ENCODE measurements at regions of chr19 and their contacts with region 1.

Region 1: DNA sequence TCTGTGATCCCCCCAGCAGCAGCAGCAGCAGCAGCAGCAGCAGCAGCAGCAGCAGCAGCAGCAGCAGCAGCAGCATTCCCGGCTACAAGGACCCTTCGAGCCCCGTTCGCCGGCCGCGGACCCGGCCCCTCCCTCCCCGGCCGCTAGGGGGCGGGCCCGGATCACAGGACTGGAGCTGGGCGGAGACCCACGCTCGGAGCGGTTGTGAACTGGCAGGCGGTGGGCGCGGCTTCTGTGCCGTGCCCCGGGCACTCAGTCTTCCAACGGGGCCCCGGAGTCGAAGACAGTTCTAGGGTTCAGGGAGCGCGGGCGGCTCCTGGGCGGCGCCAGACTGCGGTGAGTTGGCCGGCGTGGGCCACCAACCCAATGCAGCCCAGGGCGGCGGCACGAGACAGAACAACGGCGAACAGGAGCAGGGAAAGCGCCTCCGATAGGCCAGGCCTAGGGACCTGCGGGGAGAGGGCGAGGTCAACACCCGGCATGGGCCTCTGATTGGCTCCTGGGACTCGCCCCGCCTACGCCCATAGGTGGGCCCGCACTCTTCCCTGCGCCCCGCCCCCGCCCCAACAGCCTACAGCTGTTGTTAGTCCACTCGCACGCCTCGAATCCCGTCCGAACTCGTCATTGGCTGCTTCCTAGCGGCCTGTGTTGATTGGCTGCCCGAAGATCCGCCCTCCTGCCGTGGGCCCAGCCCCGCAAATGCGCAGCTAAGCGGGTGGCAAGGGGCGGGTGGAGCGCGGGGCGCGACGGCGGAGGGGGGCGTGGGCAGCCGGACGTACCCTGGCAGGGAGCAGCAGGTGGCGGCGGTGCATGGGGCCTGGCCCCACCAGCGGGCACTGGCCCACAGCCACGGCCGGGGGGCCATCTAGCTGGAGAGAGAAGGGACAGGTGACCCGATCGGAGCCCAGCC is 1.4 kb upstream of the SIX5 start:
- DNase-seq: peak; percentile 97
- ATAC-seq: peak; percentile 73
- H3K4me3 Mint-ChIP-seq: peak overlapping the region; percentile 97
- H3K27ac Mint-ChIP-seq: peak overlapping the region; percentile 97
- H3K4me1 Mint-ChIP-seq: peaks cover 13% of the 10 kb centered on the region
- H3K27me3 Mint-ChIP-seq: peaks cover 5% of the 10 kb centered on the region; the same call in 1 of the 2 replicates
- CTCF ChIP-seq: peak; percentile 98

Region 2: GRCh38 chr19:45681391-45682015 is 88.9 kb before region 1 on chr19:
- CTCF ChIA-PET with region 1: interaction called, 15 read pairs
- POLR2A ChIA-PET with region 1: interaction called, 3 read pairs
- DNase-seq: peak; percentile 93
- ATAC-seq: peak; percentile 53
- H3K4me3 Mint-ChIP-seq: peak overlapping the region; percentile 65
- H3K27ac Mint-ChIP-seq: no peak overlapping the region
- H3K4me1 Mint-ChIP-seq: peaks cover 14% of the 10 kb centered on the region
- H3K27me3 Mint-ChIP-seq: peaks cover 38% of the 10 kb centered on the region
- CTCF ChIP-seq: peak; percentile 96

Region 3: DNA sequence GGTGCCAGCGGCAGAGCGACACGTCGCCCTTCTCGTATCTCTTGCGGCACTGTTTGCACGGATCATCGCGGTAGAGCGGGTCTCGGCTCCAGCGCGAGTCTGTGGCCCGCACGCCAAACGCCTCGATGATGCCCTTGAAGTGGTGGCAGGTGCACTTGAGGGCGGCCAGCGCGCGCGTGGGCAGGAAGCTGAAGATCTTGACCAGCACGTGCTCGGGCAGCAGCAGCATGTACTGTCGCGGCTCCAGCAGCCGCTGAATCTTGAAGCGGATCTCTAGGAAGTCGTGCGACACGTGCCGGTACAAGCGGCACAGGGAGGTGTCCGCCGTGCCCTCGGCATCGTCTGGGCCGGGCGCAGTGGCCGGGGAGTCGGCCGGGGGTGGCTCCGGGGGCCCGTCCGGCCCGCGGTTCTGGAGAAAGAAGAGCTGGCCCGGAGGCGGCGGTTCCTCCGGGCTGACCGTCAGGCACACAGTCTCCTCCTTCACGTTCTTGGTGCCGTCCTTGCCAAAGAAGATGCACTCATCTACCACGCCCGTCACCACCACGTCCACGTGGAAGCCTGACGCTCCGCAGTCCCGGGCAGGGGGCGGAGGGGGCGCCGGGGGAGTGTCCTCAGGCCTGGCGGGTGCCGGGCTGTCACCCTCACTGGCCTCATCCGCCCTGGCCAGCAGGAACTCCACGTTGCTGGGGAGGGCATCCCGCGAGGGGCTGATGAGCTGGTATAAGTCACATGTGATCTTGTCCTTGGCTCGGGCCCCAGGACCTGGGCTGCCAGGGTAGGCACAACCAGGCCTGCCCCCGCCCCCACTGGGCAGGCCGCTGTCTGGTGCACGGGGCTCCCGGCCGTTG is 58.4 kb before region 1 on chr19:
- CTCF ChIA-PET with region 1: interaction called, 80 read pairs
- POLR2A ChIA-PET with region 1: interaction called, 115 read pairs
- DNase-seq: no peak
- ATAC-seq: no peak
- H3K4me3 Mint-ChIP-seq: no peak overlapping the region
- H3K27ac Mint-ChIP-seq: peak overlapping the region; percentile 68
- H3K4me1 Mint-ChIP-seq: peaks cover 25% of the 10 kb centered on the region
- H3K27me3 Mint-ChIP-seq: no peaks in the 10 kb centered on the region; the same call in 1 of the 2 replicates
- CTCF ChIP-seq: no peak

Region 4: GRCh38 chr19:45730389-45731288 is 39.8 kb before region 1 on chr19 and contains the start of gene FBXO46:
- CTCF ChIA-PET with region 1: interaction called, 24 read pairs
- POLR2A ChIA-PET with region 1: interaction called, 22 read pairs
- DNase-seq: peak; percentile 97
- ATAC-seq: peak; percentile 97
- H3K4me3 Mint-ChIP-seq: peak within 1 kb of the TSS; percentile 93
- H3K27ac Mint-ChIP-seq: peak within 1 kb of the TSS; percentile 89
- H3K4me1 Mint-ChIP-seq: peaks cover 12% of the 10 kb centered on the region
- H3K27me3 Mint-ChIP-seq: peaks cover 7% of the 10 kb centered on the region; the same call in 1 of the 2 replicates
- CTCF ChIP-seq: no peak
- total RNA-seq, gene FBXO46: 40.1 to 46.3 TPM (median 43.3 TPM) in 3 replicates

Region 5: DNA sequence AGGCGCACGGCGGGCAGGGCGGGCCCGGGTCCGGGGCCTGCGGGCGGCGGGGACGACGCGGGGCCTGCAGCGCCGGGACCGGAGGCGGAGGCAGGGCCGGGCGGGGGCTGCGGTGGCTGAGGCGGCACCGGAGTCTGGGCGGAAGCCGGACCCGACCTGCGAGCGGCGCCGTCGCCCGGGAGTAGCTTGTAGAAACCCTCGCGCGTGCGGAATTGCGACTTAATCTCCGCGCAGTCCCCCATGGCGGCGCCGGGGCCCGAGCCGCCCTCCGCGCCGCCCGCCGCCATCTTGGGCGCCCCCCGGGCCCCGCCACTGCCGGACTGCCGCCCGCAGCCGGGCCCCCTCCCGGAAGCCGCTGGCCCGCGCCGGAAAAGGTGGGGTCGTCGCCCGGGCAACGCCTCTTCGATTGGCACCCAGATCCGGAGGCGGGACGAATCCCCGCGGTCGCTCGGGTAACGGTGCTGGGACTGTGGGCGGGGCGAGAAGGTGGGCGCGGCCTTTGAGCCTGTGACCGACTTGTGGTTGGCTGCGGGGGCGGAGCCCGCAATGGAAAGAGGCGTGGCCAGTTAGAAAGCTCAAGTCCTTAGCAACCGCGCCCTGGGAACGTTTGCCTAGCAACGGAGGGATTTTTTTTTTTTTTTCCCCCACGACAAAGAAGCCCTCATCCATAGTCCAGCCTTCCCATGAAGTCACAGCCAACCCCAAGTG is 22.2 kb after region 1 on chr19 and contains the start of gene DMWD:
- CTCF ChIA-PET with region 1: interaction called, 20 read pairs
- POLR2A ChIA-PET with region 1: interaction called, 5 read pairs
- DNase-seq: peak; percentile 100
- ATAC-seq: peak; percentile 98
- H3K4me3 Mint-ChIP-seq: peak within 1 kb of the TSS; percentile 91
- H3K27ac Mint-ChIP-seq: peak within 1 kb of the TSS; percentile 61
- H3K4me1 Mint-ChIP-seq: peaks cover 17% of the 10 kb centered on the region
- H3K27me3 Mint-ChIP-seq: peaks cover 33% of the 10 kb centered on the region
- CTCF ChIP-seq: no peak
- total RNA-seq, gene DMWD: 50.2 to 60.7 TPM (median 56.6 TPM) in 3 replicates

Region 6: GRCh38 chr19:45809643-45810159 is 39.3 kb after region 1 on chr19:
- CTCF ChIA-PET with region 1: interaction called, 135 read pairs
- POLR2A ChIA-PET with region 1: interaction called, 47 read pairs
- DNase-seq: no peak
- ATAC-seq: peak; percentile 55; the same call in 1 of the 2 replicates
- H3K4me3 Mint-ChIP-seq: no peak overlapping the region
- H3K27ac Mint-ChIP-seq: peak overlapping the region; percentile 66
- H3K4me1 Mint-ChIP-seq: peaks cover 19% of the 10 kb centered on the region
- H3K27me3 Mint-ChIP-seq: peaks cover 19% of the 10 kb centered on the region
- CTCF ChIP-seq: no peak

Measured in WTC11 (cell line).